Heart left ventricle (tissue), 16 donors: ENCODE measurements at regions of chr16 and their contacts with region 1.

Region 1: GRCh38 chr16:79601931-79602627 is 1.5 kb upstream of the MAF start:
- DNase-seq: peak; percentile 66 to 87 (median 82)
- ATAC-seq: peak; percentile 7 to 51 (median 26)
- H3K4me3 ChIP-seq: peak overlapping the region; percentile 55 to 84 (median 72)
- H3K27ac ChIP-seq: peak overlapping the region in 11 of 12 donors; percentile 74 to 96 (median 90)
- H3K4me1 ChIP-seq: peaks cover 0 to 17% (median 2%) of the 10 kb centered on the region in 12 donors
- H3K27me3 ChIP-seq: no peaks in the 10 kb centered on the region
- CTCF ChIP-seq: peak; percentile 69 to 85 (median 80)
- POLR2A ChIP-seq: no peak

Region 2: GRCh38 chr16:78122774-78123315 is 1479.2 kb before region 1 on chr16:
- intact Hi-C with region 1: loop called (anchors 5 to 10 kb)
- DNase-seq: no peak
- ATAC-seq: peak; percentile 67 to 89 (median 68)
- H3K4me3 ChIP-seq: no peak overlapping the region
- H3K27ac ChIP-seq: peak overlapping the region in 6 of 12 donors; percentile 4 to 44 (median 14)
- H3K4me1 ChIP-seq: peaks cover 0 to 20% (median 11%) of the 10 kb centered on the region in 12 donors
- H3K27me3 ChIP-seq: no peaks in the 10 kb centered on the region
- CTCF ChIP-seq: peak; percentile 21 to 72 (median 53)
- POLR2A ChIP-seq: no peak

Region 3: DNA sequence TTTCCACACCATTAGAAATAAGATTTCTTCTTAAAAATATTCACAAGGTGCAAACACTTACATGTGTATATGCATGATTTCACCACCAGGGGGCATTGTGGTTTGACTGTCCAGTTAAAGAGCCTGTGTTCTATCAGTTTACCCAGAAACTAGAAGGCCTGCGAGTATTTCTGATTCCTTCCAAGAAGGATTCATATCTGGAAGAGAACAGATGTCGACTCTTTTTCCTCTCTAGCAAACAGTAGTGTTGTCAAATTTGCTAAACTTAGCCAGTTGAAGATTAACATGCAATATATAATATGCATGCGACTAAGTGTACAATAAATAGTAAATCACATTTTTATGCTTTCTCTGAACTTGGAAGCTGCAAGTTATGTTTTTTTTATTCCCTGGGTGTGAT is 1098.5 kb before region 1 on chr16:
- intact Hi-C with region 1: loop called (anchors 1 to 5 kb)
- DNase-seq: peak in 2 of 5 donors; percentile 53 to 62
- ATAC-seq: no peak
- H3K4me3 ChIP-seq: no peak overlapping the region
- H3K27ac ChIP-seq: no peak overlapping the region
- H3K4me1 ChIP-seq: peaks cover 0 to 41% (median 10%) of the 10 kb centered on the region in 12 donors
- H3K27me3 ChIP-seq: no peaks in the 10 kb centered on the region
- CTCF ChIP-seq: peak; percentile 83 to 92 (median 89)
- POLR2A ChIP-seq: no peak

Region 4: GRCh38 chr16:78770353-78771091 is 831.6 kb before region 1 on chr16:
- intact Hi-C with region 1: loop called in 2 of 10 experiments (anchors 5 kb)
- DNase-seq: peak; percentile 70 to 90 (median 77)
- ATAC-seq: peak; percentile 75 to 88 (median 83)
- H3K4me3 ChIP-seq: no peak overlapping the region
- H3K27ac ChIP-seq: peak overlapping the region in 1 of 12 donors; percentile 37
- H3K4me1 ChIP-seq: peaks cover 0 to 19% (median 5%) of the 10 kb centered on the region in 12 donors
- H3K27me3 ChIP-seq: no peaks in the 10 kb centered on the region
- CTCF ChIP-seq: peak; percentile 78 to 97 (median 90)
- POLR2A ChIP-seq: no peak

Region 5: DNA sequence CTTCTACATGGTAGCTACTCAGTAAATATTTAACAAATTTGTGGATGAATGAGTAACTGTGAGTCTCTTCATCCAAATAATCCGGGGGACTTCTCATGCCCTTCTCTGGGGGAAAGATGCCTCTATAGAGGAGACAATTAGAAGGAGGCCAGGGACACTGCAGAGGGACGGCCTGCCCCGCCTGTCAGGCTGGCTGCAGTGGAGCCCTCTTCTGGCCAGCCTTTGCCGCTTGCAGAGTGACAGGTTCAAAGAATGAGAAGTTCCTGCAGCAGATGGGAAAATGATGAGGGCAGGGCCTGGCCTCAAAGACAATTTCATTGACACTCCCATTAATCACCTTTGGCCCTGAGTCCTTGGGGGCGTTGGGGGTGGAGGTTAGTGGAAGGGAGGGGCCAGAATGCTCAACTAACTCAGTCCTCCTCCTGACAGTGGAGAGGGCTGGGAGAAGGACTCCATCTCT is 340.6 kb before region 1 on chr16:
- intact Hi-C with region 1: loop called in 2 of 10 experiments (anchors 2 to 5 kb)
- DNase-seq: peak; percentile 35 to 80 (median 57)
- ATAC-seq: peak; percentile 38 to 63 (median 54)
- H3K4me3 ChIP-seq: no peak overlapping the region
- H3K27ac ChIP-seq: peak overlapping the region in 4 of 12 donors; percentile 11 to 46 (median 22)
- H3K4me1 ChIP-seq: peaks cover 0 to 28% (median 8%) of the 10 kb centered on the region in 12 donors
- H3K27me3 ChIP-seq: peaks cover 0 to 6% (median 0%) of the 10 kb centered on the region in 9 donors
- CTCF ChIP-seq: peak; percentile 29 to 68 (median 50)
- POLR2A ChIP-seq: no peak

Region 6: GRCh38 chr16:79816081-79816497 is 214.0 kb after region 1 on chr16:
- intact Hi-C with region 1: no loop called
- DNase-seq: peak in 2 of 5 donors; percentile 23 to 40
- ATAC-seq: peak in 2 of 4 donors; percentile 74 to 83
- H3K4me3 ChIP-seq: no peak overlapping the region
- H3K27ac ChIP-seq: no peak overlapping the region
- H3K4me1 ChIP-seq: no peaks in the 10 kb centered on the region
- H3K27me3 ChIP-seq: peaks cover 0 to 5% (median 0%) of the 10 kb centered on the region in 9 donors
- CTCF ChIP-seq: no peak
- POLR2A ChIP-seq: no peak

Region 7: GRCh38 chr16:79836132-79836531 is 234.1 kb after region 1 on chr16:
- intact Hi-C with region 1: no loop called
- DNase-seq: no peak
- ATAC-seq: no peak
- H3K4me3 ChIP-seq: no peak overlapping the region
- H3K27ac ChIP-seq: no peak overlapping the region
- H3K4me1 ChIP-seq: peaks cover 0 to 11% (median 0%) of the 10 kb centered on the region in 12 donors
- H3K27me3 ChIP-seq: no peaks in the 10 kb centered on the region
- CTCF ChIP-seq: no peak
- POLR2A ChIP-seq: no peak

Region 8: DNA sequence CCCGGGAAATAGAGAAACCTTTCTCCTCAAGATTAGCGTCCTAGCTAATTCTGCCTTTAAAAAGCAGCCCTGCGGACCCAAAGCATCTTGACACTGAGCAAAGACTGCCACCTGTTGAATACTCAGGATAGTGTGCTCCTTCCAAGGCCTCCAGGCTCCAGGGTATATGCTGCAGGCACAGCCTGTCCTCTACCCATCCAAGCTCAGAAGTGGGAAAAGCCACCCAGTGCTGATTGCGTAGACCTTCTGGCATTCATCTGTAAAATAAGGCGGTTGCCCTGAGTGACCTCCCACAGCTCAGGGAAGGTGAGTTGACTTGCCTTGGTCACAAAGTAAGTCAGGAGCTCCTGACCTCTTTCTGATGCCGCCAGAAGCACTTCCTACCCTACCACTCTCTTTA is 482.6 kb after region 1 on chr16:
- intact Hi-C with region 1: loop called in 7 of 10 experiments (anchors 5 to 10 kb)
- DNase-seq: peak in 4 of 5 donors; percentile 32 to 43 (median 38)
- ATAC-seq: peak; percentile 67 to 96 (median 92)
- H3K4me3 ChIP-seq: no peak overlapping the region
- H3K27ac ChIP-seq: no peak overlapping the region
- H3K4me1 ChIP-seq: peaks cover 0 to 5% (median 0%) of the 10 kb centered on the region in 12 donors
- H3K27me3 ChIP-seq: no peaks in the 10 kb centered on the region
- CTCF ChIP-seq: peak; percentile 43 to 76 (median 66)
- POLR2A ChIP-seq: no peak